ENCODE measurements at regions of chr1 and their contacts with region 1.

Region 1: GRCh38 chr1:160342953-160343869 is at the starts of genes COPA and NCSTN:
- DNase-seq: peak; percentile 87
- H3K4me3 Mint-ChIP-seq: peak within 1 kb of the TSS; percentile 99
- H3K27ac Mint-ChIP-seq: peak within 1 kb of the TSS; percentile 99
- H3K4me1 Mint-ChIP-seq: peaks cover 44% of the 10 kb centered on the region
- H3K27me3 Mint-ChIP-seq: no peaks in the 10 kb centered on the region
- total RNA-seq, gene COPA: 153 and 154 TPM in 2 replicates
- total RNA-seq, gene NCSTN: 65.3 and 72.4 TPM in 2 replicates

Region 2: DNA sequence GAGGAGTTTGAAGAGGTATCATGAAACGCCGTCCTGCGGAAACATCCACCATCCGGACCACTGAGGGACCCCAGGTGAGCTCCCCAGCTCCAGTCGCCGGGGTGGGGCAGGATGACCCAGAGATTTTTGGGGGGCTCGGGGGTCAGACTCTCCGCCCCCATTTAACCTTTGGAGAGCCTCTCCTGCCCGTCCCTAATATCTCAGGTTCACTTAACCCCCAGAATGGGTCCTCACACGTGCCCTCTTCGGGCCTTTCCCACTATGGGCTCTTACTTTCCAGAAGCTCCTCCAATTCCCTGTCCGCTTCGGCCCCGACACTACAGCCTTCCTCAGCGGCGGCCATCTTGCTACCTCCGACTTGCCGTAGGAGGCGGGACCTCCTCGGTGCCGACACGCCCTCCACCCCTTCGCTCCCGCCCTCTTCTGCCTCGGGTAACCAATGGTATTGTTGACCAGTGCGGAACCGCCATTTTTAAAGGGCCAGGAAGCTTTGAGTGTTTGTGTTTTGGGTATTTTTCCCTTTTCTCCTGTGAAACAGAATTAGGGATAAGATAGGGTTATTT is 58.3 kb before region 1 on chr1 and contains the start of gene PEX19:
- intact Hi-C with region 1: loop called (anchors 2 kb)
- DNase-seq: peak; percentile 92
- H3K4me3 Mint-ChIP-seq: peak within 1 kb of the TSS; percentile 99
- H3K27ac Mint-ChIP-seq: peak within 1 kb of the TSS; percentile 97
- H3K4me1 Mint-ChIP-seq: peaks cover 19% of the 10 kb centered on the region
- H3K27me3 Mint-ChIP-seq: no peaks in the 10 kb centered on the region
- total RNA-seq, gene PEX19: 60.9 and 68.5 TPM in 2 replicates

Region 3: GRCh38 chr1:160376525-160377131 is 33.4 kb after region 1 on chr1:
- intact Hi-C with region 1: loop called (anchors 5 kb)
- DNase-seq: no peak
- H3K4me3 Mint-ChIP-seq: no peak overlapping the region
- H3K27ac Mint-ChIP-seq: no peak overlapping the region
- H3K4me1 Mint-ChIP-seq: peaks cover 10% of the 10 kb centered on the region
- H3K27me3 Mint-ChIP-seq: no peaks in the 10 kb centered on the region

Region 4: DNA sequence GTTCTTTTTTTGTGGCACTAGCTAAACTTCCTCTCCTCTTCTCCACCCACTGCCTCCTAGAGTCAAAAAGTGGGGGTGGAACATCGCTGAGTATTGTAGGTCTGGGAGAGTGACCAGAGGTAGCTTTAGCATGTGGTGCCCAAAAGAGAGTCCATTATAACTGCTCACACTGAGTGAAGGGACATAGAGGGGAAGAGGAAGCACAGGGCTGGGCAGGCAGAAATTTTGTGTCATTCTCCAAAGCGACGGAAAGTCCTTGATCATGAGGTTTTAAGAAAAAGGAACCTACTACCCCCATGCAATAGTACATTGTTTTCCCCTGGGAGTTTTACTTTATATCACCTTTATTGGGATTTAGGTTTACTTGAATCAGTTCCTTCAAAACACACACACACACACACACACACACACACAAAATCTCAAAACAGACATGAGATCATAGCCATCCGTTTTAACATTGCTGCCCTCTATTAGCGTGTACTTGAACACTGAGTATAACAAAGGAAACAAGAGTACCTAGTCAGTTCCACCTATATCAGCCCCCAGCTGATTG is 232.0 kb after region 1 on chr1:
- intact Hi-C with region 1: no loop called
- DNase-seq: no peak
- H3K4me3 Mint-ChIP-seq: peak overlapping the region; percentile 51
- H3K27ac Mint-ChIP-seq: peak overlapping the region; percentile 93
- H3K4me1 Mint-ChIP-seq: peaks cover 87% of the 10 kb centered on the region
- H3K27me3 Mint-ChIP-seq: no peaks in the 10 kb centered on the region